ENCODE measurements at regions of chr4 and their contacts with region 1.

Region 1: GRCh38 chr4:169069972-169070902 is 60.2 kb upstream of the CBR4 start:
- DNase-seq: no peak
- CTCF ChIP-seq: no peak

Region 2: GRCh38 chr4:167084306-167084705 is 1985.9 kb before region 1 on chr4:
- CTCF ChIA-PET with region 1: no interaction called
- POLR2A ChIA-PET with region 1: interaction called, 12 read pairs
- DNase-seq: no peak
- CTCF ChIP-seq: no peak

Region 3: DNA sequence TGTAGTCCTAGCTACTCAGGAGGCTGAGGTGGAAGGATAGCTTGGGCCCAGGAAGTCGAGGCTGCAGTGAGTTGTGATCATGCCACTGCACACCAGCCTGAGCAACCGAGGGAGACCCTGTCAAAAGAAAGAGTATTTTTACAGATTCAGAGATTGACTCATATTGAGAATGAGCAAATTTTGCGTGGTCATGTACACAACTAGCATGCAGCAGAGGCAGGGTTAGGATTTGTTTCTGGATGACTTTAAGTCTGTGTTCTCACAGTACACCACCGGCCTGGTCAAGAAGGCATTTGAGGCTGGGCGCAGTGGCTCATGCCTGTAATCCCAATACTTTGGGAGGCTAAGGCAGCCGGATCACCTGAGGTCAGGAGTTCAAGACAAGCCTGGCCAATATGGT is 15.4 kb before region 1 on chr4:
- CTCF ChIA-PET with region 1: interaction called, 11 read pairs
- POLR2A ChIA-PET with region 1: interaction called, 6 read pairs
- DNase-seq: peak; percentile 32
- CTCF ChIP-seq: no peak

Region 4: GRCh38 chr4:169090484-169091215 is 20.4 kb after region 1 on chr4:
- CTCF ChIA-PET with region 1: no interaction called
- POLR2A ChIA-PET with region 1: no interaction called
- DNase-seq: no peak
- CTCF ChIP-seq: no peak

Region 5: DNA sequence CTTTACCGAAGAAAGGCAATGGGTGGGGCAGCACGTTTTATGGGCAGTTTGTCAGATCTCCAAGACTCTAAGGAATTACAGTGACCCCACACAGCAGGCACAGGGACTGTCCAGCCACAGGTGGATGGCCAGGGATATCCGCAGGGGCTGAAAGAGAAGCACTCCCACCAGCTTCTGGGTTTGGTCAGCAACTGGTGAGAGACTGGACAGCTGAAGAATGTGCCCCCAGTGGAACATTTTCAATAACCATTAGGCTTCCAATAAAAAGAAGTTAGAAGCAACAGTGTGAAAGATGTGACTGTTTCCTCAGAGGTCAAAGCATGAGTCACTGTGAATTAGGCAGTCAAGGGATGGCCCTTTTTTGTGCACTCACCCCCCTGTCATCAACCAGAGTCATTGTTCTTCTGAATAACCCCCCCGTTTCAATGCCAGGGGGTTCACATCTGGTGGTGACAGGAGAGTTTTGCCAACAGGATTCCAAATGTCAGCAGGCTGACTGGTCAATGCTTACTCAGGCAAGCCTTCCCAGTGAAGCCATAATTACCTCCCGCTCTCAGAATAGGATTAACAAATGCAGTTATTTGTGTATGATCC is 275.1 kb after region 1 on chr4:
- CTCF ChIA-PET with region 1: no interaction called
- POLR2A ChIA-PET with region 1: no interaction called
- DNase-seq: no peak
- CTCF ChIP-seq: no peak